CD8-positive, alpha-beta T cell (primary cell): ENCODE measurements at regions of chr15 and their contacts with region 1.

Region 1: DNA sequence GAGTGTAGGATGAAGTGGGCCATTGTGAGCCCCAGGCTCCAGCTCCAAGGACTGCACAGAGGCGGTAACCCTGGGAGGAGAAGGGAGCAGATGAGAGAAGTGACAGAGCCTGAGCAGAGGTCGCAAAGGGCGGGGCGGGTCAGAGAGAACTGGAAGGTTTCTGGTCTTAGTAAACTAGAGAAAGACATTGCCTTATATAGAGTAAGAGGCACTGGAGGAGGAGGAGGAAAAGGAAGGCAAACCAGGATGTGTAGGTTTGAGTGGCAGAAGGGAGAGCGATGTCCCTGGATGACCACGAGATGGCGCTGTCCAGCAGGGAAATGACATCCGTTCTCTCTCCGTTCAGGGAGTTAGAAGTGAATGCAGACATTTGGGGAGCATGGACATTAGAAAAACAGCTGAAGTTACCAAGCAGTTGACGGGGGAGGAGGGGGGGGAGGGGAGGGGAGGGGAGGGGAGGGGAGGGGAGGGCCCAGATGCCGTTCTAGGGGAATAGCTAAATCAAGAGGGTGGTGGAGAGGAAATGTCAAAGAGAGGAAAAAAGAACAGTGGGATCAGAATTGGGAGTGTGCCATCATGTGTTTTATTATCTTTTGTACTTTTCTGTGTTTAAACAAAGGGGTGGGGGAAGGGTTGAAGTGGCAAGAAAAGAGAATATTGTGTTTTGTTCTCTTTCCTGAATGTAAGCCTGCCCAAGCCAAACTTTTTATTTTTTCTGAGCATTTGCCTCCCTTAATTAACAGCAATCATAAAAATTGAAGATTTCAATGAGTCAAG is 48.8 kb downstream of the STARD5 start:
- DNase-seq: peak; percentile 45 to 91 (median 87)
- ATAC-seq: peak; percentile 98
- H3K4me3 ChIP-seq: no peak overlapping the region
- H3K4me3 Mint-ChIP-seq: no peak overlapping the region
- H3K27ac ChIP-seq: no peak overlapping the region
- H3K27ac Mint-ChIP-seq: peak overlapping the region; percentile 80
- H3K4me1 ChIP-seq: peaks cover 29% of the 10 kb centered on the region
- H3K4me1 Mint-ChIP-seq: peaks cover 51% of the 10 kb centered on the region
- H3K27me3 ChIP-seq: no peaks in the 10 kb centered on the region
- H3K27me3 Mint-ChIP-seq: no peaks in the 10 kb centered on the region
- CTCF ChIP-seq: peak; percentile 64

Region 2: DNA sequence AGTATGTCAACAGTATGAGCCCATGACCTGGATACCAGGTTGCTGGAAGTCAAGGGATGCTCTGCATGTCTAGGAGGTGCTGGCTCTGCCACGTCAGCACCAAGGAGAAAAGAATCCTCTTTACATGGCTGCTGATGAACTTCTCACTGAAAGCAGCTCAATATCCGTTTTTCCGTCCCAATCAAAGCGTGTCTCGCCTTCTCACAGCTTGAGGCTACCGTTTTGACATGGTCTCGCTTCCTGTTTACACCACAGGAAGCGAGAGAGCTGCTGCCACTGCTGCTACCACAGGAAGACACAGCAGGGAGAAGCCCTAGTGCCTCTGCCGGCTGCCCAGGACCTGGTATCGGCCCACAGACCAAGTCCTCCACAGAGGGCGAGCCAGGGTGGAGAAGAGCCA is 21.6 kb after region 1 on chr15:
- CTCF ChIA-PET with region 1: interaction called, 498 read pairs
- POLR2A ChIA-PET with region 1: interaction called, 9 read pairs
- intact Hi-C with region 1: loop called (anchors 1 kb)
- DNase-seq: peak; percentile 50 to 94 (median 79)
- ATAC-seq: peak; percentile 46
- H3K4me3 ChIP-seq: peak overlapping the region; percentile 88 to 89
- H3K4me3 Mint-ChIP-seq: peak overlapping the region; percentile 92
- H3K27ac ChIP-seq: peak overlapping the region; percentile 84 to 92
- H3K27ac Mint-ChIP-seq: peak overlapping the region; percentile 98
- H3K4me1 ChIP-seq: peaks cover 55% of the 10 kb centered on the region
- H3K4me1 Mint-ChIP-seq: peaks cover 72% of the 10 kb centered on the region
- H3K27me3 ChIP-seq: no peaks in the 10 kb centered on the region
- H3K27me3 Mint-ChIP-seq: no peaks in the 10 kb centered on the region
- CTCF ChIP-seq: no peak

Region 3: DNA sequence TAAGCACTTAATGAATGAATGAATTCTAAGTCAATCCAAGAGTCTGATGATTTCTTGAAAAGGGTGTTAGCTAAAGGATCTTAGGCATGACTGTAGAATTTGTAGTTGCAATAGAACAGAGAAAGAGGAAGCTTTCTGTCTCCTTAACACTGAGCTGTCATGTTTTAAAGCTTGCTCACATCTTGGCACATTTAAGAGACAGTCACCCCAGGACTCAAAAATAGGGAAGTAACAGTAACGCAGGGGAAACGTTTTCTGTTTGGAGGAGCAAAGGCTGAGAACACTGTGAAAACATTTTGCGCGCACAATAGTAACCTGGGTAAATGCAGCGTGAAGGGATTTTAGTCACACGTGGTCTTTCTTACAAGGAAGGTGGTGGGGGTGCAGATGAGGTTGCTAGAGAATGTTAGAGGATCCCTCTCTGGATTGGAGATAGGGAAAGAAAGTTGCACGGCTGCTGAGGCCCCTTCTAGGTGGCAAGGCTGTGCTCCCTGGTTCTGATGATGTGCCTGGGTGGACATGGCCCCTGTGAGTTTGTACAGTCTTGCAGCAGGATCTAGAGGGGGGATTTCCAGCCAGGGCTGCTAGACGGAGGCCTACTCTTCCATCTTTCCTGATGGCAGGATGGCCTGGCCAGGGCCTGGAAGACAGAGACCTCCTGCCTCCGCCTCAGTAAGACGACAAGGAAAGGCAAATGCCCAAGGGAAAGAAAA is 36.8 kb after region 1 on chr15:
- CTCF ChIA-PET with region 1: interaction called, 498 read pairs
- POLR2A ChIA-PET with region 1: interaction called, 24 read pairs
- intact Hi-C with region 1: no loop called
- DNase-seq: peak in 1 of 9 experiments; percentile 37
- ATAC-seq: peak; percentile 43
- H3K4me3 ChIP-seq: no peak overlapping the region
- H3K4me3 Mint-ChIP-seq: peak overlapping the region; percentile 20
- H3K27ac ChIP-seq: peak overlapping the region; percentile 4 to 39
- H3K27ac Mint-ChIP-seq: peak overlapping the region; percentile 91
- H3K4me1 ChIP-seq: peaks cover 70% of the 10 kb centered on the region
- H3K4me1 Mint-ChIP-seq: peaks cover 86% of the 10 kb centered on the region
- H3K27me3 ChIP-seq: no peaks in the 10 kb centered on the region
- H3K27me3 Mint-ChIP-seq: no peaks in the 10 kb centered on the region
- CTCF ChIP-seq: no peak

Region 4: DNA sequence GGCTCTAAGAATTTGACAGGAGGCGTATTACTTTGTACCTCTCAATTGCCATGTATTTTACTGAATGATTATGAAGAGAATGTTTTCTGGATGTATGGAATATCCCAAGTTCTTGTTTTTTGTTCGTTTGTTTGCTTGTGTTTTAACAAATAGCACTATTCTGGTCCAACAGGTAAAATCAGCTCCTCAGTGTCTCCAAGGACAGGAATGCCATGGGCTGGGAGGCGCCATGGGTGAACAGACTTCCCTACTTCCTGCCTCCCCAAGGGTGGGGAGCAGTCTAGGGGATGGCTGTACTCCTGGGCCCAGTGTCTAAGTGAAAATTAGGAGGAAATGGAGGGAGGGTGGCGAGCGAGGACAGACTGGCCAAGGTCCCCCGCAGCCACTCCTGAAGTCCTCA is 67.4 kb after region 1 on chr15:
- CTCF ChIA-PET with region 1: interaction called, 434 read pairs
- POLR2A ChIA-PET with region 1: no interaction called
- intact Hi-C with region 1: no loop called
- DNase-seq: no peak
- ATAC-seq: no peak
- H3K4me3 ChIP-seq: no peak overlapping the region
- H3K4me3 Mint-ChIP-seq: no peak overlapping the region
- H3K27ac ChIP-seq: no peak overlapping the region
- H3K27ac Mint-ChIP-seq: no peak overlapping the region
- H3K4me1 ChIP-seq: no peaks in the 10 kb centered on the region
- H3K4me1 Mint-ChIP-seq: no peaks in the 10 kb centered on the region
- H3K27me3 ChIP-seq: no peaks in the 10 kb centered on the region
- H3K27me3 Mint-ChIP-seq: no peaks in the 10 kb centered on the region
- CTCF ChIP-seq: no peak

Region 5: DNA sequence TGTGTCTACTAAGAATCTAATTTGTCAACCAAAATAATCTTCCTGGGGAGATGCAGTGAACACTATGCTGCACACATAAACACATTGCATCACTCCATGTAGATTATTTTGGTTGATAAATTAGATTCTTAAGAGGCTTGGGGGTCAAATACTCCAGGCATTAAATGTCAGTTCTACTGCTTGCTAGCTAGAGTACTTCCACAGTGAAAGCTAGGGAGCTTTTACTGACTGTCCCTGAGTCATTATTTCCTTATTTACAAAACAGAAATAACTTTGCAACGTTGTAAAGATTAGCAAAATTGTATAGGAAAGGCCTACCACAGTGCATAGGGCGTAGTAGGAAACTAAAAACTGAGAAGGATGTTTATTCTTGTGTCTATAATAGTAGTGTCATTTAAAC is 111.8 kb after region 1 on chr15:
- CTCF ChIA-PET with region 1: interaction called, 13 read pairs
- POLR2A ChIA-PET with region 1: no interaction called
- intact Hi-C with region 1: no loop called
- DNase-seq: no peak
- ATAC-seq: no peak
- H3K4me3 ChIP-seq: no peak overlapping the region
- H3K4me3 Mint-ChIP-seq: no peak overlapping the region
- H3K27ac ChIP-seq: no peak overlapping the region
- H3K27ac Mint-ChIP-seq: no peak overlapping the region
- H3K4me1 ChIP-seq: no peaks in the 10 kb centered on the region
- H3K4me1 Mint-ChIP-seq: no peaks in the 10 kb centered on the region
- H3K27me3 ChIP-seq: no peaks in the 10 kb centered on the region
- H3K27me3 Mint-ChIP-seq: no peaks in the 10 kb centered on the region
- CTCF ChIP-seq: no peak

Region 6: DNA sequence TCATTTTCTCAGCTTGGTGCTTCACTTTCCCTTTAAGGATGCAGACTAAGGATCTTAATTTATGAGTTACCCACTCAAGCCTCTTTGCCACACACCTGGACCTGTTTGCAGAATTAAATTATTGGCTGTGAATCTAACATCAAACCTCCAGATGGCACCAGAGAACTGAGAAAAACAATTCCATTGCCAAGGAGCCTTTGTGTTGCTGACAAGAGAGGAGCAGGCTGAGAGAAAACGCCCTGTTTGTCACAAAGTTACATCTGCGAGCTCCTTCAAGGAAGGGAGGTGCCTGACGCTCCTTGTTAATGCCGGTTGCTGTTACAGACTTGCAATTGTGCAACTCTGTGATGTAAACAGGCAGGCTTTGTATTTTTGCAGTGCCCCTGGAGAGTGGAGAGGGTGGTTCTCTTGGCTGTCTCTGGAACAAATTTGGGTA is 135.2 kb after region 1 on chr15:
- CTCF ChIA-PET with region 1: interaction called, 20 read pairs
- POLR2A ChIA-PET with region 1: interaction called, 3 read pairs
- intact Hi-C with region 1: no loop called
- DNase-seq: peak in 5 of 9 experiments; percentile 16 to 69 (median 52)
- ATAC-seq: peak; percentile 54
- H3K4me3 ChIP-seq: no peak overlapping the region
- H3K4me3 Mint-ChIP-seq: no peak overlapping the region
- H3K27ac ChIP-seq: no peak overlapping the region
- H3K27ac Mint-ChIP-seq: no peak overlapping the region
- H3K4me1 ChIP-seq: peaks cover 8% of the 10 kb centered on the region
- H3K4me1 Mint-ChIP-seq: peaks cover 12% of the 10 kb centered on the region
- H3K27me3 ChIP-seq: no peaks in the 10 kb centered on the region
- H3K27me3 Mint-ChIP-seq: peaks cover 11% of the 10 kb centered on the region
- CTCF ChIP-seq: peak; percentile 49